Cardiac septum (tissue), 1 donor: ENCODE measurements at regions of chr19 and their contacts with region 1.

Region 1: DNA sequence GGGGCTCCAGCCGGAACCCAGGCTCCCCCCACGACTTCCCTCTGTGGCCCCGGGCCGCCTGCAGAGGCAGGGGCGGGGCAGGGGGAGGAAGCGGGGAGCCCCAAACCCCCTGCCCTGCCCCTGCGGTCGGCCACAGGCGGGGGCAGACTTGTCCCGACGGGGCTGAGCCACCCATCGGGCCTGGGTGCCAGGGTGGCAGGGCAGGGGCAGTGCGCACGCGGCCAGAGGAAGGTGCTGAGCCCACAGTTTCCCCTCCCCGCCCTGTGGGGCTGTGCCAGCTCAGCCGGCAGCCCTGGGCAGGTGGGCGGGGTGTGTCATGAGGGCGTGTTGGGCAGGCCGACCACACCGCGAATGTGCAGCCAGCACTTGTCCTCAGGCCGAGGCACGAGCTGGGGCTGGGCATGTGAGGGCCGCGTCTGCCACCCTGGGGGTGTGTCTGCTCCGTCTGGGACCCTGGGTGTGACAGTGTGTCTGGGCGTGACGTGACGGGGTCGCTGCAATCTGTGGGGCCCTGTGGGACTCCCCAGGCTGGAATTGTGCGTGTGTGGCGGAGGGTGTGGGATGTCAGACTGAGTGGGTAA is 17.7 kb downstream of the CCDC97 start:
- DNase-seq: peak; percentile 91

Region 2: DNA sequence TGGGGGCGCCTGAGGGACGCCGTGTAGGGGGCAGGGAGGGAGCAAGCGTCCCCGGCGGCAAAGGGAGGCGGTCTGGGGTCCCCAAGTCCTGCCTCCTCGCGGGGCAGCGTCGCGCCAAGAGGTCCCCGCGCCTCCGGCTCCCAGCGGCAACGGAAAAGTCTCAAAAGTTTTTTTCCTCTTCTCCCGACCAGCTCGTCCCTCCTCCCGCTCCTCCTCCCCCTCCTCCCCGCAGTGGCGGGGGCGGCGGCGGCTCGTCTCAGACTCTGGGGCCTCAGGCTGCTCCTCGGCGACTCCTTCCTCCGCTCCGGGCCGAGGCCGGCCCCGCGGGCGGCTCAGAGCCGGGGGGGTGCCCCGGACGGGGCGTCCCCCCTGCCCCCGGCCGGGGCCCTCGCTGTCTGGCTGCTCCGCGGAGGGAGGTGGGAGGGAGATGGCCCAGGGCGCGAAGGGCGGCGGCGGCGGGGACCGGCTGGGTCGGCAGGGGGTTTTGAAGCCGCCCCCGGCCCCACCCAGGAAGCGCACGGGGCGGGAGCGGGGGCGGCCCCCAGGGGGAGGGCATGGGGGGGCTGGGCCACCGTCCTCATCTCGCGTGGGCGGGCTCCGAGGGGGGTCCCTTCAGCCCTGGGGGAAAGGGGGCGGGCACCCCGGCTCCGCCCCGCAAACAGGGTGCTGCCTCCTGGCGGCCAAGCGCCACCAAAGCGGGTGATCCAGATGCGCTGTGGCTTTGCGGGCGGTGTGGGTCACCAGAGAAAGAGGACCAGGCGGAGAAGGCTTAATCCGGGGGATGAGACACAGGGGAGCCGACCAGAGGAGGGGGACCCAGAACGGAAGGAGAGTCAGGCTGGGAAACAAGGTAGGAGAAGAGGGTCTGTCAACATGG is 26.0 kb after region 1 on chr19 and contains the start of gene TGFB1:
- intact Hi-C with region 1: loop called (anchors 2 kb)
- DNase-seq: peak; percentile 97
- total RNA-seq, gene TGFB1: 26.4 TPM

Region 3: DNA sequence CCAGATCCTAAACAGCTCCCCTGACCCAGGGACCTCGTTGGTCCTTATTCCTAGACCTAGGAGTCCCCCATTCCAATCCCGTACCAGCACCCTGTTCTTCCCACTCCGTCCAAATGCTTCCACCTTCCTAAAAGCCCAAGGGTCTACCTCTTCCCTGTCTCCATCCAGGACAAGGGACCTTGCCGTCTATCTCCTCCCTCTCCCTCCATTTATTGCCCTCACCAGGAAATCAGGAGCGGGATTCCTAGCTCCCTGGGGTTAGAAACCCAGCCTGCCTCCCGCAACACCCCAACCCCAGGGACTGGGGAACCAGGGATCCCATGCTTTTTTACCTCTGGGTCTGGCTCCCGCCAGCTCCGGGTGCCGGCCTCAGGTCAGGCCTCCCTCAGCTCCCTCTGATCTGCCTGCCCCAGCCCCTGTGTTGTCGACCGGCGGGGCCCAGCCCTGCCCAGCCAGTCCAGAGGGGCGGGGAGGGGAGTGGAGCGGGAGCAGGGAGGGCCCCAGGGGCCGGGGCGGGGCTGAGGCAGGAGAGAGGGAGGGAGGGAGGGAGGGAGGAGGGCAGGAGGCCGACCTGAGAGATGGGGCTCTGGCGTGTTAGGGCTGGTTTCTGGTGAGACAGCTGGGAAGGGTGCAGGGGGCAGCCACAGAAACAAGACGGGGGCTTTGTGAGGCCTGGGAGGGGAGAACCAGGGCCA is 99.4 kb after region 1 on chr19 and contains the start of gene B3GNT8:
- intact Hi-C with region 1: loop called (anchors 5 kb)
- DNase-seq: peak; percentile 96
- total RNA-seq, gene B3GNT8: 3.9 TPM